Naive thymus-derived CD4-positive, alpha-beta T cell (primary cell): ENCODE measurements at regions of chr2 and their contacts with region 1.

Region 1: GRCh38 chr2:108583903-108584520 is 49.7 kb downstream of the LIMS1 start:
- DNase-seq: peak in 8 of 9 donors; percentile 33 to 66 (median 52)
- ATAC-seq: peak; percentile 83
- H3K4me3 ChIP-seq: no peak overlapping the region
- H3K4me3 Mint-ChIP-seq: peak overlapping the region in 1 of 10 donors; percentile 32
- H3K27ac ChIP-seq: no peak overlapping the region
- H3K27ac Mint-ChIP-seq: no peak overlapping the region
- H3K4me1 ChIP-seq: peaks cover 0 to 3% of the 10 kb centered on the region in 2 donors
- H3K4me1 Mint-ChIP-seq: peaks cover 11 to 38% (median 18%) of the 10 kb centered on the region in 7 donors
- H3K27me3 ChIP-seq: no peaks in the 10 kb centered on the region
- H3K27me3 Mint-ChIP-seq: no peaks in the 10 kb centered on the region

Region 2: DNA sequence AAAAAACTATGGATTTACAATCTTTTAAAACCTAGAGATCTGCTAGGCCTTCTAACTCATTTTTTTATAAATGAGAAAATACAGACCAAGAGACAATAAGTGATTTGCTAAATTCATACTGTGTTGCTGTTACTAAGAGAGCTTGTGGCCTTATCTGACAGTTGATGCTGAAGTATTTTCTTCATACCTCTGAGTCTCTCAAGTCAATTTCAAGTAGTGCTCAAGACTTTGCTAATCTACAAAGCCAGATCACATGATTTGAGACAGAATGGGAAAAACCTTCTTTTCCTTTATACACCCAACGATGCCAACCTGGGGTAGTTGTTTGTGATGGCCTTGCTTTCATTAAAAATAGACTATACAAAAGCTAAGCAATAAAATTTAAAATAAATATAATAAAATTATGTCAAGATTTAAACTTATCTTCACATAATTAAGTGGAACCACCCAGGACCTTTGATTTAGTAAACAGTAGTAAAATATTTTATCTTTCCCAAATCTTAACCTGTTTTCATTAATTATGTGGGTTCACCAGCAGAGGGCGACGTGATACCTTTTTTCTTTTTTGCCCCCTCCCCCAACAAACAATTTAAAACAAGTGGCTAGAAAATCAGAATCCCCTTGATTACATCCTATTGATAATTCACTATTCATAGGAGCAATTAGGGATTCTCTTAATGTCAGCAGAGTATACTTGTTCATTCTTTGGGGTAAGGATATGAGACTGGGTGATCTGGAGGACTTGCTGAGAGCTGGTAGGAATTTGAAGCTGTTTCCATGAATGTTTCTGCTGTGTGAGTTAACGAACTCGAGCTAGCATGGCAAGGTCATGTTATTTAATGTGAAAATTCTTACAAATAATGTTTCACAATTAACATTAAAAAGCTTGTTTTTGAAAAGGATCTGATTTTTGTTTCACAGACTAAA is 647.3 kb before region 1 on chr2:
- CTCF ChIA-PET with region 1: interaction called, 3 read pairs
- POLR2A ChIA-PET with region 1: no interaction called
- intact Hi-C with region 1: loop called in 1 of 2 experiments (anchors 2 kb)
- DNase-seq: peak in 1 of 9 donors; percentile 1
- ATAC-seq: no peak
- H3K4me3 ChIP-seq: no peak overlapping the region
- H3K4me3 Mint-ChIP-seq: no peak overlapping the region
- H3K27ac ChIP-seq: no peak overlapping the region
- H3K27ac Mint-ChIP-seq: no peak overlapping the region
- H3K4me1 ChIP-seq: no peaks in the 10 kb centered on the region
- H3K4me1 Mint-ChIP-seq: no peaks in the 10 kb centered on the region
- H3K27me3 ChIP-seq: no peaks in the 10 kb centered on the region
- H3K27me3 Mint-ChIP-seq: peaks cover 0 to 14% (median 10%) of the 10 kb centered on the region in 5 donors

Region 3: GRCh38 chr2:108212671-108213070 is 371.3 kb before region 1 on chr2:
- CTCF ChIA-PET with region 1: no interaction called
- POLR2A ChIA-PET with region 1: no interaction called
- intact Hi-C with region 1: loop called in 1 of 2 experiments (anchors 5 kb)
- DNase-seq: no peak
- ATAC-seq: no peak
- H3K4me3 ChIP-seq: no peak overlapping the region
- H3K4me3 Mint-ChIP-seq: no peak overlapping the region
- H3K27ac ChIP-seq: no peak overlapping the region
- H3K27ac Mint-ChIP-seq: no peak overlapping the region
- H3K4me1 ChIP-seq: no peaks in the 10 kb centered on the region
- H3K4me1 Mint-ChIP-seq: peaks cover 0 to 4% (median 0%) of the 10 kb centered on the region in 7 donors
- H3K27me3 ChIP-seq: no peaks in the 10 kb centered on the region
- H3K27me3 Mint-ChIP-seq: peaks cover 0 to 9% (median 4%) of the 10 kb centered on the region in 5 donors

Region 4: DNA sequence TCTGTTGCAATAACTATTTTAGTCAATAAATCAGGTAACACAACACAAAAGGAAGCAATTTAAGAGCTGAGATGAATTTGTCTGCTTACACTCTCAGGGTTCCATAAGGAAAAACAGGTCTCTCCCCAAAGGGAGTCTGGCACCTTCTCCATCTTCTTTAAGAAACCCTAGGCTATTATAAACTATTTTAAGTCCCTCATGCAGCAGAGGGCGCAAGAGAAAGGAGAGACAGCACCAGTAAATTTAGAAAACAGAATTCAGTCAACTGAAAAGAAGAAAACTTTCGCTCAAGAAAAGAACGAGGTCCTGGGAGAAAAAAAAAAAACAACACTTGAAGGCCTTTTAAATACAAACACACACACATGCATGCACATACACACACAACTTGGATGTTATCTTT is 187.2 kb before region 1 on chr2:
- CTCF ChIA-PET with region 1: interaction called, 3 read pairs
- POLR2A ChIA-PET with region 1: no interaction called
- intact Hi-C with region 1: loop called (anchors 1 to 5 kb)
- DNase-seq: no peak
- ATAC-seq: no peak
- H3K4me3 ChIP-seq: no peak overlapping the region
- H3K4me3 Mint-ChIP-seq: no peak overlapping the region
- H3K27ac ChIP-seq: no peak overlapping the region
- H3K27ac Mint-ChIP-seq: no peak overlapping the region
- H3K4me1 ChIP-seq: no peaks in the 10 kb centered on the region
- H3K4me1 Mint-ChIP-seq: no peaks in the 10 kb centered on the region
- H3K27me3 ChIP-seq: no peaks in the 10 kb centered on the region
- H3K27me3 Mint-ChIP-seq: peaks cover 0 to 14% (median 4%) of the 10 kb centered on the region in 5 donors

Region 5: DNA sequence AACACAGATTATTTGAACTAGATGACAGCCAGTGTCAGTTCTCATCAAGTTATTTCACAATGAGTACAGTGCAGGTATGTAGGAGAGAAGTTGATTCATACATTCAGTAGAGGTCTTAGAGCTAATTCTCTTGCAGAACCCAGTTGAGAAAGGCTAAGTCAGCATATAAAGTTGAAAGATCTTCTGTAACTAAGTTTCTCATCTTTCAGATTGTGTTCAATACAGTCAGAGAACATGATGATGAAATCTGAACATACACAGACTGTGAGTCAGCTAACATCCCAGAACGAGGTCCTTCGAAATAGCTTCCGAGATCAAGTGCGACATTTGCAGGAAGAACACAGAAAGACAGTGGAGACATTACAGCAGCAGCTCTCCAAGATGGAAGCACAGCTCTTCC is 91.6 kb before region 1 on chr2:
- CTCF ChIA-PET with region 1: no interaction called
- POLR2A ChIA-PET with region 1: no interaction called
- intact Hi-C with region 1: no loop called
- DNase-seq: no peak
- ATAC-seq: no peak
- H3K4me3 ChIP-seq: no peak overlapping the region
- H3K4me3 Mint-ChIP-seq: no peak overlapping the region
- H3K27ac ChIP-seq: no peak overlapping the region
- H3K27ac Mint-ChIP-seq: peak overlapping the region in 2 of 9 donors; percentile 8 to 51
- H3K4me1 ChIP-seq: no peaks in the 10 kb centered on the region
- H3K4me1 Mint-ChIP-seq: peaks cover 0 to 5% (median 0%) of the 10 kb centered on the region in 7 donors
- H3K27me3 ChIP-seq: no peaks in the 10 kb centered on the region
- H3K27me3 Mint-ChIP-seq: no peaks in the 10 kb centered on the region

Region 6: GRCh38 chr2:108533832-108534583 is 50.0 kb before region 1 on chr2 and contains the start of gene LIMS1:
- CTCF ChIA-PET with region 1: no interaction called
- POLR2A ChIA-PET with region 1: no interaction called
- intact Hi-C with region 1: loop called in 1 of 2 experiments (anchors 2 kb)
- DNase-seq: peak; percentile 69 to 85 (median 79)
- ATAC-seq: peak; percentile 98
- H3K4me3 ChIP-seq: peak within 1 kb of the TSS; percentile 93
- H3K4me3 Mint-ChIP-seq: peak within 1 kb of the TSS; percentile 86 to 99 (median 95)
- H3K27ac ChIP-seq: peak within 1 kb of the TSS; percentile 76
- H3K27ac Mint-ChIP-seq: peak within 1 kb of the TSS; percentile 34 to 96 (median 89)
- H3K4me1 ChIP-seq: peaks cover 3 to 9% of the 10 kb centered on the region in 2 donors
- H3K4me1 Mint-ChIP-seq: peaks cover 20 to 59% (median 28%) of the 10 kb centered on the region in 7 donors
- H3K27me3 ChIP-seq: no peaks in the 10 kb centered on the region
- H3K27me3 Mint-ChIP-seq: no peaks in the 10 kb centered on the region
- total RNA-seq, gene LIMS1: 25.3 to 75.3 (median 49.9) TPM

Region 7: GRCh38 chr2:108776475-108776874 is 192.5 kb after region 1 on chr2:
- CTCF ChIA-PET with region 1: no interaction called
- POLR2A ChIA-PET with region 1: no interaction called
- intact Hi-C with region 1: no loop called
- DNase-seq: no peak
- ATAC-seq: no peak
- H3K4me3 ChIP-seq: no peak overlapping the region
- H3K4me3 Mint-ChIP-seq: no peak overlapping the region
- H3K27ac ChIP-seq: no peak overlapping the region
- H3K27ac Mint-ChIP-seq: peak overlapping the region in 5 of 9 donors; percentile 5 to 79 (median 22)
- H3K4me1 ChIP-seq: no peaks in the 10 kb centered on the region
- H3K4me1 Mint-ChIP-seq: peaks cover 0 to 12% (median 0%) of the 10 kb centered on the region in 7 donors
- H3K27me3 ChIP-seq: no peaks in the 10 kb centered on the region
- H3K27me3 Mint-ChIP-seq: no peaks in the 10 kb centered on the region